CD4-positive, alpha-beta memory T cell (primary cell): ENCODE measurements at regions of chr1 and their contacts with region 1.

Region 1: DNA sequence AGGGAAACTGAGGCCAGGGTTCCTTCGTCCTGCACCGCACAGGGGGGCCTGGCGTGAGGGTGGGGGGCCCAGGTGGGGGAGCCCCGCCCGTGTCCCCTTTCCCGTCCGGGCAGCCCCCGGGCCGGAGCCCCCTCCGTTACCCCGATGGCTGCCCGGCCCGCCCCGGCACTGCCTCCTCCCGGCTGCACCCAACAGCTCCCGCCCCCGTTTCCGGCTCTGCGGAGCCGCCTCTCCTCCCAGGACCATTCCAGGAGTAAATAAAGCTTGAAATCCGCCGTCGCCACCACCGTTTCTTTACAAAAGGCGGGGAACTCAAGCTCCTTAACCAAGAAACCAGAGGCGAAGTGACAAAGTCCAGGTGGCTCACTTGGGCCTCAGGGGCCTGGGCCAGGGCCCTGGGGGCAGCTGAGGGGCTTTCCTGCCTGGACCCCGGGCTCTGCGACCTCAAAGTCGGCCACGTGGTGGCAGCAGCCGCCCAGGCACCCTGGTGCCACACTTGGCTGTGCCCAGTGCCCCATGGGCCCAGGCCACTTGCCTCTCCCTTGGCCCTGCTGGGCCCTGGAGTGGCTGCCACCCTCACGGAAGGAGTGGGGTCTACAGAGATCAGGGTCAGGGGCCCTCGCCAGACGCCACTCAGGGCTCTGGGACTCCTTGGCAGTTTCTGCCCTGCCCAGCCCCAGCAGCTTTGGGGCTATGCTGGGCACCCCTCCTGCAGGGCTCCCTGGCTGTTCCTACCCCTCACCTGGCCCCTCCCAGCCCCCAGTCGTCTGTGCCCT is 514 bp upstream of the FAAP20 start:
- DNase-seq: peak; percentile 91 to 98 (median 94)
- H3K4me3 ChIP-seq: peak overlapping the region; percentile 57 to 68
- H3K4me3 Mint-ChIP-seq: peak overlapping the region; percentile 82 to 94 (median 84)
- H3K27ac ChIP-seq: peak overlapping the region; percentile 64
- H3K27ac Mint-ChIP-seq: peak overlapping the region; percentile 87 to 97 (median 92)
- H3K4me1 ChIP-seq: peaks cover 49% of the 10 kb centered on the region
- H3K4me1 Mint-ChIP-seq: peaks cover 8 to 43% (median 24%) of the 10 kb centered on the region in 4 donors
- H3K27me3 ChIP-seq: no peaks in the 10 kb centered on the region
- H3K27me3 Mint-ChIP-seq: no peaks in the 10 kb centered on the region

Region 2: GRCh38 chr1:2133039-2133878 is 61.8 kb before region 1 on chr1:
- CTCF ChIA-PET with region 1: interaction called, 4 read pairs
- POLR2A ChIA-PET with region 1: interaction called, 5 read pairs
- intact Hi-C with region 1: loop called (anchors 5 kb)
- DNase-seq: peak; percentile 97 to 98 (median 98)
- H3K4me3 ChIP-seq: peak overlapping the region; percentile 61 to 77
- H3K4me3 Mint-ChIP-seq: peak overlapping the region; percentile 82 to 92 (median 85)
- H3K27ac ChIP-seq: peak overlapping the region; percentile 64
- H3K27ac Mint-ChIP-seq: peak overlapping the region; percentile 81 to 98 (median 97)
- H3K4me1 ChIP-seq: peaks cover 11% of the 10 kb centered on the region
- H3K4me1 Mint-ChIP-seq: peaks cover 10 to 47% (median 28%) of the 10 kb centered on the region in 4 donors
- H3K27me3 ChIP-seq: no peaks in the 10 kb centered on the region
- H3K27me3 Mint-ChIP-seq: no peaks in the 10 kb centered on the region

Region 3: DNA sequence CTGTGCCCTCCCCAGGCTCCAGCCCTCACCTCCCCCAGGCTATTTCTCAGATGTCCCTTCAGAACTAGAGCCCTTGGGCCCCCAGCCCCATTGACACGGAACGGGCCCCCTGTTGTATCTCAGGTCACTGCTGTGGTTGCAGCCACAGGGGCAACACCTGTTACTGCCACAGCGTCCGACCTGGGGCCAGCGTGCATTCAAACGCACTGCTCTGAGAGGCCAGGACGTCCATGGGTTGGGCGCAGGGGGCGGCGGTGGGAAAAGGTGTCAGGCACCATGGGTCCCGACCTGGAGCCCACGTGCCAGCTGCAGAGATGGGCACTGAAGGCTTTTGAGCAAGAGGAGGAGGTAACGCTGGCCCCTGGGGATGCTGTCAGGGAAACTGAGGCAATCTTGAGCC is 13.8 kb before region 1 on chr1:
- CTCF ChIA-PET with region 1: no interaction called
- POLR2A ChIA-PET with region 1: no interaction called
- intact Hi-C with region 1: no loop called
- DNase-seq: no peak
- H3K4me3 ChIP-seq: no peak overlapping the region
- H3K4me3 Mint-ChIP-seq: no peak overlapping the region
- H3K27ac ChIP-seq: no peak overlapping the region
- H3K27ac Mint-ChIP-seq: no peak overlapping the region
- H3K4me1 ChIP-seq: no peaks in the 10 kb centered on the region
- H3K4me1 Mint-ChIP-seq: peaks cover 0 to 4% (median 1%) of the 10 kb centered on the region in 4 donors
- H3K27me3 ChIP-seq: no peaks in the 10 kb centered on the region
- H3K27me3 Mint-ChIP-seq: no peaks in the 10 kb centered on the region

Region 4: GRCh38 chr1:2227346-2228153 is 32.5 kb after region 1 on chr1:
- CTCF ChIA-PET with region 1: interaction called, 40 read pairs
- POLR2A ChIA-PET with region 1: interaction called, 83 read pairs
- intact Hi-C with region 1: no loop called
- DNase-seq: peak; percentile 90 to 98 (median 96)
- H3K4me3 ChIP-seq: no peak overlapping the region
- H3K4me3 Mint-ChIP-seq: peak overlapping the region in 7 of 8 donors; percentile 51 to 82 (median 67)
- H3K27ac ChIP-seq: peak overlapping the region; percentile 26
- H3K27ac Mint-ChIP-seq: peak overlapping the region in 4 of 7 donors; percentile 41 to 79 (median 59)
- H3K4me1 ChIP-seq: peaks cover 20% of the 10 kb centered on the region
- H3K4me1 Mint-ChIP-seq: peaks cover 6 to 27% (median 16%) of the 10 kb centered on the region in 4 donors
- H3K27me3 ChIP-seq: no peaks in the 10 kb centered on the region
- H3K27me3 Mint-ChIP-seq: peaks cover 0 to 4% of the 10 kb centered on the region in 2 donors

Region 5: DNA sequence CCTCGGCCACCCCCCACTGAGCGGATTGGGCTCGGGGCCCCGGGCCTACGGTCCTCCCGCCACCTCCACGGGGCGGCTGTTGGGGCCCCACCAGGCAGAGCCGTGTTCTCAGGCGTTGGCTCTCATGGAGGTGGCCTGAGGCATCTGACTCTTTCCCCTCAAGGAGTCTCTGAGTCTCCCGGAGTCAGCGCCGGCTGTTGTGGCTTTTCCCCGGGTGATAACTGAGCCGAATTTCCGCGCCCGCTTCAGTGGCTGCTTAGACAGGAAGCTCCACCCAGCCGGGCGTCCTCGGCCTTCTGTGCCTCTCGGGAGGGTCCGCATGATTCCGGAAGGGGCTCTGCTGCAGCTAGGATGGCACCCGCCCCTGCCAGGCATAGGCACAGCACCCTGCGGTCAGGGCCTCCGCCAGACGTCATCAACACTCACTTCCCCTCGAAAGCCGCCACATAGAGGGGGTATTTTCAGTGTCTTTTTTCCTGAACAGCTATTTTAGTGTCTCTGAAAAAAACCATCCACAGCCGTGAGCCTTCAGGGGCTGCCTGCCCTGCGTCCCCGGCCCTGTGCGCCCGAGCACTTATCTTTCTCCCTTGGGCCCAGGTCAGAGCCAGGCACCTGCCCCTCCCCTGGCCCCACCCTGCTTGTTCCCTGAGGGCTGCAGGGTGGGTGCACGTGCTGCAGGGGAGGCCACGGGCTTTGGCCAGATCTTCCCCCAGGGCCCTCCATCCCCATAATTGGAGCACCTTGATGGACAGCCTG is 105.9 kb after region 1 on chr1:
- CTCF ChIA-PET with region 1: interaction called, 6 read pairs
- POLR2A ChIA-PET with region 1: interaction called, 16 read pairs
- intact Hi-C with region 1: loop called (anchors 2 kb)
- DNase-seq: peak; percentile 96 to 99 (median 97)
- H3K4me3 ChIP-seq: peak overlapping the region; percentile 47 to 57
- H3K4me3 Mint-ChIP-seq: peak overlapping the region; percentile 77 to 92 (median 86)
- H3K27ac ChIP-seq: peak overlapping the region; percentile 96
- H3K27ac Mint-ChIP-seq: peak overlapping the region; percentile 99 to 100 (median 99)
- H3K4me1 ChIP-seq: peaks cover 67% of the 10 kb centered on the region
- H3K4me1 Mint-ChIP-seq: peaks cover 15 to 71% (median 46%) of the 10 kb centered on the region in 4 donors
- H3K27me3 ChIP-seq: no peaks in the 10 kb centered on the region
- H3K27me3 Mint-ChIP-seq: no peaks in the 10 kb centered on the region

Region 6: GRCh38 chr1:2391041-2391930 is 196.2 kb after region 1 on chr1 and contains the starts of genes MORN1 and RER1:
- CTCF ChIA-PET with region 1: interaction called, 11 read pairs
- POLR2A ChIA-PET with region 1: interaction called, 32 read pairs
- intact Hi-C with region 1: loop called (anchors 2 kb)
- DNase-seq: peak; percentile 98 to 100 (median 99)
- H3K4me3 ChIP-seq: peak within 1 kb of the TSS; percentile 57 to 75
- H3K4me3 Mint-ChIP-seq: peak within 1 kb of the TSS; percentile 85 to 93 (median 90)
- H3K27ac ChIP-seq: peak within 1 kb of the TSS; percentile 76
- H3K27ac Mint-ChIP-seq: peak within 1 kb of the TSS; percentile 87 to 95 (median 93)
- H3K4me1 ChIP-seq: peaks cover 37% of the 10 kb centered on the region
- H3K4me1 Mint-ChIP-seq: peaks cover 20 to 49% (median 38%) of the 10 kb centered on the region in 4 donors
- H3K27me3 ChIP-seq: no peaks in the 10 kb centered on the region
- H3K27me3 Mint-ChIP-seq: no peaks in the 10 kb centered on the region
- total RNA-seq, gene MORN1: 12.5 to 15.3 TPM
- total RNA-seq, gene RER1: 149 to 151 TPM

Region 7: GRCh38 chr1:2586154-2587070 is 391.3 kb after region 1 on chr1 and contains the start of gene PRXL2B:
- CTCF ChIA-PET with region 1: interaction called, 7 read pairs
- POLR2A ChIA-PET with region 1: interaction called, 4 read pairs
- intact Hi-C with region 1: loop called (anchors 2 kb)
- DNase-seq: peak; percentile 95 to 98 (median 95)
- H3K4me3 ChIP-seq: peak within 1 kb of the TSS; percentile 52 to 72
- H3K4me3 Mint-ChIP-seq: peak within 1 kb of the TSS; percentile 87 to 98 (median 92)
- H3K27ac ChIP-seq: peak within 1 kb of the TSS; percentile 90
- H3K27ac Mint-ChIP-seq: peak within 1 kb of the TSS; percentile 95 to 99 (median 97)
- H3K4me1 ChIP-seq: peaks cover 42% of the 10 kb centered on the region
- H3K4me1 Mint-ChIP-seq: peaks cover 22 to 56% (median 36%) of the 10 kb centered on the region in 4 donors
- H3K27me3 ChIP-seq: no peaks in the 10 kb centered on the region
- H3K27me3 Mint-ChIP-seq: no peaks in the 10 kb centered on the region
- total RNA-seq, gene PRXL2B: 26.5 to 27.2 TPM